Left cardiac atrium (tissue), 4 donors: ENCODE measurements at regions of chrX and their contacts with region 1.

Region 1: DNA sequence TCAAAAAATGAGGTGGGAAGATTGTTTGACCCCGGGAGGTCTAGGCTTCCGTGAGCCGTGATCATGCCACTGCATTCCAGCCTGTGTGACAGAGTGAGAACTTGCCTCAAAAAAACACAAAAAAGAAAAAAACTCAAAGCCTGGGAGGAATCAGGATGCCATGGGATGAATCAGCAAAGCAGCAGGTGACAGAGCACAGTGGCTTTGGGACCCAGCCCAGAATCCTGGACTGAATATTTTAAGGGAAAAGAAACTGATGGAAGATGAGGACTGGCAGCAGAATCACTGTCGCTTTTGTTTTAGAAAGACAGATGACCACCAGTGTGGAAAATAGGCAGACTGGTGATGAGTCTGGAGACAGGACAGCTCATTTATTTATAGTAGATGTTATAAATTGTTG is 16.6 kb downstream of the S100G start:
- DNase-seq: no peak
- ATAC-seq: no peak

Region 2: DNA sequence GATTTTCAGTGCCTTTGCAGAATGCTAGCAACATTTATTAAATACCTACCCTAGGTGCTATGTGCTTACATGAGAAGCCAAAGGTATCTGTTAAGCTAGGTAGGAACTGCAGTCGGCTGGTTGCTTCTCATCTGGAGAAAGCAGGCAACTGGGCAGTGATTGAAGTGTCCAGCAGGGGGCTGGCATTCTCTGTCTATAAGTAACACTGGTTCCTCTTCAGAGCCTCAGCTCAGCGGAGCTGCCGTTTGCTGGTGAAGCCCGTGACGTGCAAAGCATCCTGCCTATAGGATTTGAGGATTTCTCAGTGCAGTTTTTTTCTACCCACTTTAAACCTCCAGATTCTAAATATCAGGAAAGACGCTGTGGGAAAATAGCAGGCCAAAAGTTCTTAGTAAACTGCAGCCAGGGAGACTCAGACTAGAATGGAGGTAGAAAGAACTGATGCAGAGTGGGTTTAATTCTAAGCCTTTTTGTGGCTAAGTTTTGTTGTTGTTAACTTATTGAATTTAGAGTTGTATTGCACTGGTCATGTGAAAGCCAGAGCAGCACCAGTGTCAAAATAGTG is 543.2 kb before region 1 on chrX and contains the start of gene GRPR:
- intact Hi-C with region 1: loop called in 1 of 2 experiments (anchors 10 kb)
- DNase-seq: peak; percentile 75
- ATAC-seq: peak; percentile 90 to 93
- total RNA-seq, gene GRPR: 0.29 TPM

Region 3: GRCh38 chrX:16436348-16437188 is 230.0 kb before region 1 on chrX:
- intact Hi-C with region 1: loop called (anchors 10 kb)
- DNase-seq: peak; percentile 71
- ATAC-seq: peak; percentile 81 to 83